OCI-LY7 (cell line): ENCODE measurements at regions of chr4 and their contacts with region 1.

Region 1: DNA sequence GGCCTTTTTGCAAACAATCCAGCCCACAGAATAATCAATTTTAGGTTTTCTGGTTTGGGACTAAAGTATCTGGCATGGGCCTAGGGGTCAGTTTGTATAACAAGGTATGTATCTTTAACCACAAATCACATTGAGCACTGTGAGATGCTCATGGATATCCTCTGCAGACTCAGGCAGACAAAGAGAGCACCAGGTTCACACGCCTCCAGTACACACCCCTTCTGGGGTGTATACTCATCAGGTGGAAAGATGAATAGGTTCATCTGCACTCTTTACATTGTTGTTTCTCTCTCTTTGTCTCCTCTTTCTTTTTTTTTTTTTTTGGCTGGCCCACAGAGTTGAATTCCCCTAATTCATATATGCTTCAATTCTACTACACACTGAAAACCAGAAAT is 21.1 kb downstream of the TEC start:
- DNase-seq: no peak
- H3K4me3 ChIP-seq: no peak overlapping the region
- H3K27ac ChIP-seq: no peak overlapping the region
- H3K4me1 ChIP-seq: no peaks in the 10 kb centered on the region
- CTCF ChIP-seq: no peak

Region 2: GRCh38 chr4:48203819-48204218 is 44.7 kb before region 1 on chr4:
- CTCF ChIA-PET with region 1: no interaction called
- POLR2A ChIA-PET with region 1: no interaction called
- intact Hi-C with region 1: no loop called
- DNase-seq: no peak
- H3K4me3 ChIP-seq: peak overlapping the region; percentile 8
- H3K27ac ChIP-seq: peak overlapping the region; percentile 54
- H3K4me1 ChIP-seq: peaks cover 44% of the 10 kb centered on the region
- CTCF ChIP-seq: no peak

Region 3: GRCh38 chr4:48237996-48238645 is 10.4 kb before region 1 on chr4:
- CTCF ChIA-PET with region 1: no interaction called
- POLR2A ChIA-PET with region 1: interaction called, 10 read pairs
- intact Hi-C with region 1: no loop called
- DNase-seq: no peak
- H3K4me3 ChIP-seq: no peak overlapping the region
- H3K27ac ChIP-seq: no peak overlapping the region
- H3K4me1 ChIP-seq: no peaks in the 10 kb centered on the region
- CTCF ChIP-seq: no peak